ENCODE measurements at regions of chr19 and their contacts with region 1.

Region 1: GRCh38 chr19:47112997-47113849 is at the start of gene ZC3H4:
- DNase-seq: peak; percentile 98 to 100
- H3K4me3 ChIP-seq: peak within 1 kb of the TSS; percentile 71
- H3K27ac ChIP-seq: peak within 1 kb of the TSS; percentile 98
- H3K4me1 ChIP-seq: peaks cover 31% of the 10 kb centered on the region
- H3K27me3 ChIP-seq: no peaks in the 10 kb centered on the region
- CTCF ChIP-seq: 0 out of 2 replicates have a peak, but pooled peaks have one; percentile 25
- total RNA-seq, gene ZC3H4: 41.6 and 51.9 TPM in 2 replicates

Region 2: DNA sequence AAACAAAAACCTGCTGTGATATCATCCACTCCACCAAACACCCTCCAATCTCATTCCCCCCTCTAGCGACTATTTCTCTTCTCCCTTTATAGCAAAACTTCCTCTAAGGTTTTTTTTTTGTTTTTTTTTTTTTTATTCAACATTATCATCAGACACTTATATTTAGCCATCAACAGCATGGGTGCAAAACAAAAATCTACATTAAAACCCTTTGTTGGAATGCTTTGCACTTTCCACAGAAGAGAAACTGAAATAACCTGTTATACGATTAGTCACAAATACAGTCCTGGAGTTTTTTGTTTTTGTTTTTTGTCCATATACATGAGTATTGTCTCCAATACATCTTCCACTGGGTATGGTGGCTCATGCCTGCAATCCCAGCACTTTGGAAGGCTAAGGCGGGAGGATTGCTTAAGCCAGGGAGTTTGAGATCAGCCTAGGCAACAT is 287.7 kb before region 1 on chr19:
- CTCF ChIA-PET with region 1: no interaction called
- POLR2A ChIA-PET with region 1: interaction called, 33 read pairs
- intact Hi-C with region 1: no loop called
- DNase-seq: peak in 1 of 2 experiments; percentile 93
- H3K4me3 ChIP-seq: no peak overlapping the region; the same call in 1 of the 2 replicates
- H3K27ac ChIP-seq: peak overlapping the region; percentile 49
- H3K4me1 ChIP-seq: peaks cover 58% of the 10 kb centered on the region
- H3K27me3 ChIP-seq: no peaks in the 10 kb centered on the region
- CTCF ChIP-seq: 0 out of 2 replicates have a peak, but pooled peaks have one; percentile 31

Region 3: DNA sequence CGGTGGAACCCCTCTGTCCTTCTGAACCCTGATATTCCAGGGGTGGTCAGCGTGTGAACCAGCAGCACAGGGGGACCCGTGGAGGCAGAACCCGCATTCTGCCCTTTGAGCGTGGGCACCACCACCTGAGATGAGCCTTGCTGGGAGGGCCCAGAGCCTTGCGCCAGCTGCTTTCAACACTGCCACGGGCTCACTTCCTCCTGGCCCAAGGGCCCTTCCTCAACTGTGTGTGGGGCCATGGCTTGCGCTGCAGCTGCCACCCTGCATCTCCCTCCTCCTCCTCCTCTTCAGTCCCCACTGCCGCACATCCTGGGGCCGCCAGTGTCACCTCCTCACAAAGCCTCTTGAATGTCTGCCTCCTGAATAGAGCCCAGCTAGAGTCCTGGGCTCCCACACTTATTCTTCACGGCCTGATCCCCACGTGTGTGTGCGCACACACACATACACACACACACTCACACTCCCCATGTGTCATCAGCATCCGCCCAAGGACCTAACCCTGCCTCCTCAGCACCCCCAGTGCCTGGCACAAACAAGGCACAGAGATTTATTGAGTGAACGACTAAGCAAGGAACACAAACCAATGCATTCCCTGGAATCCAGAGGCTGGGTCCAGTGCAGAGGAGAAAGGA is 37.9 kb before region 1 on chr19:
- CTCF ChIA-PET with region 1: interaction called, 3 read pairs
- POLR2A ChIA-PET with region 1: interaction called, 10 read pairs
- intact Hi-C with region 1: no loop called
- DNase-seq: no peak
- H3K4me3 ChIP-seq: no peak overlapping the region
- H3K27ac ChIP-seq: no peak overlapping the region
- H3K4me1 ChIP-seq: peaks cover 5% of the 10 kb centered on the region
- H3K27me3 ChIP-seq: no peaks in the 10 kb centered on the region
- CTCF ChIP-seq: no peak

Region 4: GRCh38 chr19:47093841-47094240 is 19.4 kb before region 1 on chr19:
- CTCF ChIA-PET with region 1: interaction called, 5 read pairs
- POLR2A ChIA-PET with region 1: interaction called, 19 read pairs
- intact Hi-C with region 1: loop called (anchors 1 kb)
- DNase-seq: no peak
- H3K4me3 ChIP-seq: no peak overlapping the region
- H3K27ac ChIP-seq: no peak overlapping the region
- H3K4me1 ChIP-seq: peaks cover 40% of the 10 kb centered on the region
- H3K27me3 ChIP-seq: no peaks in the 10 kb centered on the region
- CTCF ChIP-seq: no peak

Region 5: DNA sequence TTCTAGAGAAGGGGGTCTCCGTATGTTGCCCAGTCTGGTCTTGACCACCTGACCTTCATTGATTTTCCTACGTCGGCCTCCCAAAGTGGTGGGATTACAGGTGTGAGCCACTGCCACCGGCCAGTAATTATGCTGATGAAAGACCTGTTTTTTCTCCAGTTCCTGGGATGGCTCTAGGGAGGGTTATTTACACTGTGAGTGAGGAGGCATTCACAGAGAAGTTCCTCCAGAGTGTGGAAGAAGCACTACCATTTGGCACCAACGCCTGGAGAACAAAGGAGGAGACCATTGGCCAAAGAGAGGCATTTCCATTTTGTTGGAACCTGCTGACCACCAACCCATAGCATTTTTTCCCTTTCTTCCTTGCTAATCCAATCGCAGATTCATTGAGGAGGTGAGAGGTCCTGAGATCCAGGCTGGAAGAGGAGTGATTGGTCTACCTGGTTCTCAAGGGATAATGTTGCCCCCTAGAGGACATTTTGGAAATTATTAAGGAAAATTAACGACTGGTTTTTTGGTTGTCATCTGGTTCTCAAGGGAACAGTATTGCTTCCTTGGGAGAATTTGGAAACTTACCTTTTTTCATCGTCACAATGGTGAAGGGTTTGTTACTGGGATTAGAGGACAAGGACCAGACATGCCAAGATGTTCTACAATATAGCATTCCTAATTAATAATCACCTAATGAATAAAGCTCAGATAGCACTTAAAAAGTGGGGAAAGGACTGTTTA is 11.9 kb after region 1 on chr19:
- CTCF ChIA-PET with region 1: interaction called, 3 read pairs
- POLR2A ChIA-PET with region 1: interaction called, 9 read pairs
- intact Hi-C with region 1: loop called (anchors 1 kb)
- DNase-seq: peak; percentile 39 to 75
- H3K4me3 ChIP-seq: no peak overlapping the region
- H3K27ac ChIP-seq: peak overlapping the region; percentile 65
- H3K4me1 ChIP-seq: peaks cover 40% of the 10 kb centered on the region
- H3K27me3 ChIP-seq: no peaks in the 10 kb centered on the region
- CTCF ChIP-seq: peak; percentile 96

Region 6: GRCh38 chr19:47186446-47187334 is 73.5 kb after region 1 on chr19:
- CTCF ChIA-PET with region 1: no interaction called
- POLR2A ChIA-PET with region 1: no interaction called
- intact Hi-C with region 1: no loop called
- DNase-seq: no peak
- H3K4me3 ChIP-seq: no peak overlapping the region
- H3K27ac ChIP-seq: no peak overlapping the region
- H3K4me1 ChIP-seq: 0 out of 2 replicates have a peak, but pooled peaks cover 6% of the 10 kb centered on the region
- H3K27me3 ChIP-seq: no peaks in the 10 kb centered on the region
- CTCF ChIP-seq: no peak

Region 7: DNA sequence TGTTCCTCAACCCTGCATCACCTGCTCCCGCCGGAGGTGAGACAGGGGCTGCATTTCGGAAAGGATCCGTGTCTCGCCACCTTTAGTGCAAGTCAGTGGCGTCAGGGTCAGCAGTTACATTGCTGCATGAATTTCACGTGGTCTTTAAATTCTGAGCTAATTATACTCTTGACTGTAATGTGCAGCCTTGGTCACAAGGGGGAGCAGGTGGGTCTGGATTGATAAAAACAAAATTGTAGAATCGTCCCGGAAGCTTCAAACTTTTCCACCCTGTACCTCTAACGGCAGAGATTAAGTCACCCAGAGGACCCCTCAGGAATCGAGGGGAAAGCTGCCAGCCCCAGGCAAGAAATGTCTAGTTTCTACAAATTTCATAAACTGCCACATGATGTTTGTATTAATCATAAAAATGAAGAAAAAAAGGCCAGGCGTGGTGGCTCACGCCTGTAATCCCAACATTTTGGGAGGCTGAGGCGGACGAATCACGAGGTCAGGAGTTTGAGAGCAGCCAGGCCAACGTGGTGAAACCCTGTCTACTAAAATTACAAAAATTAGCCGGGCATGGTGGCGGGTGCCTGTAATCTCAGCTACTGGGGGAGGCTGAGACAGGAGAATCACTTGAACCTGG is 97.6 kb after region 1 on chr19:
- CTCF ChIA-PET with region 1: no interaction called
- POLR2A ChIA-PET with region 1: no interaction called
- intact Hi-C with region 1: no loop called
- DNase-seq: peak; percentile 67 to 70
- H3K4me3 ChIP-seq: no peak overlapping the region
- H3K27ac ChIP-seq: peak overlapping the region; percentile 70
- H3K4me1 ChIP-seq: peaks cover 15% of the 10 kb centered on the region
- H3K27me3 ChIP-seq: no peaks in the 10 kb centered on the region
- CTCF ChIP-seq: peak; percentile 95

Region 8: DNA sequence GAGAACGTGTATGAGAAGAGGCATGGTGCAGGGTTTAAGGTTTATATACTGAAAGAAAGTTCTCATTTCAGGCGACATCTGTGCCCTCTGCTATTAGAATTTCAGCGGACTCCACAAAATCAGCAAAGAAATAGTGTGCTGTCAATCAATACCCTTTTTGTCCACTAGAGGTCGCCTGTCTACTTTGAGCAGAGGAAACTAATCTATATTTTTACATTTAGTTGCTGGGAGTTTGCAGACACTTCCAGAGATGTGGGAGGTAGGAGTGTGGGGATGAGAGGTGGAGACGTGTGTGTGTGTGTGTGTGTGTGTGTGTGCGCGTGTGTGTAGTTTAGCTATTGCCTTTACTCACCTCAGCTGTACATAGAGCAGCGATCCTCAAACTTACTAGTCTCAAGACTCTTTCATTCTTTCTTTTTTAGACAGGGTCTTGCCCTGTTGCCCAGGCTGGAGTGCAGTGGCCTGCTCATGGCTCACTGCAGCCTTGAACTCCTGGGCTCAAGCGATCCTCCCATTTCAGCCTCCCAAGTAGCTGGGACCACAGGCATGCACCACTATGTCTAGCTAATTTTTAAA is 171.2 kb after region 1 on chr19:
- CTCF ChIA-PET with region 1: no interaction called
- POLR2A ChIA-PET with region 1: interaction called, 10 read pairs
- intact Hi-C with region 1: no loop called
- DNase-seq: peak; percentile 41 to 56
- H3K4me3 ChIP-seq: no peak overlapping the region
- H3K27ac ChIP-seq: no peak overlapping the region
- H3K4me1 ChIP-seq: peaks cover 29% of the 10 kb centered on the region
- H3K27me3 ChIP-seq: no peaks in the 10 kb centered on the region
- CTCF ChIP-seq: peak; percentile 96

Region 9: DNA sequence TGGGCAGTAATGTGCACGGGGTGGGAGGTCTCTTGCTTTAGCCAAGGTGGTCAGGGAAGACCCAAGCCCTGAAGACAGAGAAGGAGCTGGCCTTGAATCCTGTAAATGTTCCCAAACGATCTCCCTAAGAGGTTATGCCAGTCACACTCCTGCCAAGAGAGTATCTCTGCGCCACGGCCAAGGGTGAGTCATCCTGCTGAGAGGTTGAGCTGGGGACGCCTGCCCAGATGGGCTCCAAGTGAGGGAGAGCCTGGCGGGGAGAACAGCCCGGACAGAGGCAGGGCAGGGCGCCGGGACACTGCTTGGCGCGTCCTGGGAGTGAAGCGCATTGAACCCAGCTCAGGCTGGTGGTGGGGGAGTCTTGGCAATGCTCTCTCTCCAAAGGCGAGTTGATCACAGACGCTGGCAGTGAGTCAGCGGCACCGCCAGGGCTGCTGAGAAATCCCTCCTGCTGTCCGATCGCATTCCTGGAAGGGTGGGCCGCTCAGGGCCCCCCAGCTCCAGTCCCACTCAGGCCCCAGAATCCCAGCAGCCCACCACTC is 1455.2 kb after region 1 on chr19:
- CTCF ChIA-PET with region 1: no interaction called
- POLR2A ChIA-PET with region 1: interaction called, 10 read pairs
- intact Hi-C with region 1: no loop called
- DNase-seq: peak; percentile 83
- H3K4me3 ChIP-seq: peak overlapping the region; percentile 32; the same call in 1 of the 2 replicates
- H3K27ac ChIP-seq: peak overlapping the region; percentile 40
- H3K4me1 ChIP-seq: peaks cover 29% of the 10 kb centered on the region
- H3K27me3 ChIP-seq: no peaks in the 10 kb centered on the region
- CTCF ChIP-seq: no peak

Measured in PC-9 (cell line).